ENCODE measurements at regions of chr13 and their contacts with region 1.

Region 1: GRCh38 chr13:19782049-19782726 is 557 bp downstream of the PSPC1 start:
- DNase-seq: peak; percentile 60
- H3K4me3 Mint-ChIP-seq: peak overlapping the region; percentile 97
- H3K27ac Mint-ChIP-seq: peak overlapping the region; percentile 97
- H3K4me1 Mint-ChIP-seq: peaks cover 17% of the 10 kb centered on the region
- H3K27me3 Mint-ChIP-seq: peaks cover 5% of the 10 kb centered on the region

Region 2: GRCh38 chr13:19681517-19681916 is 100.7 kb before region 1 on chr13:
- intact Hi-C with region 1: loop called (anchors 5 kb)
- DNase-seq: no peak
- H3K4me3 Mint-ChIP-seq: no peak overlapping the region
- H3K27ac Mint-ChIP-seq: no peak overlapping the region
- H3K4me1 Mint-ChIP-seq: peaks cover 24% of the 10 kb centered on the region
- H3K27me3 Mint-ChIP-seq: no peaks in the 10 kb centered on the region

Region 3: GRCh38 chr13:19726611-19727010 is 55.6 kb before region 1 on chr13:
- intact Hi-C with region 1: loop called (anchors 5 kb)
- DNase-seq: no peak
- H3K4me3 Mint-ChIP-seq: no peak overlapping the region
- H3K27ac Mint-ChIP-seq: no peak overlapping the region
- H3K4me1 Mint-ChIP-seq: peaks cover 10% of the 10 kb centered on the region
- H3K27me3 Mint-ChIP-seq: no peaks in the 10 kb centered on the region